HEK293 (cell line): ENCODE measurements at regions of chr17 and their contacts with region 1.

Region 1: GRCh38 chr17:32877164-32877764 is 340 bp upstream of the MYO1D start:
- H3K4me3 ChIP-seq: peak overlapping the region; percentile 88
- H3K27ac ChIP-seq: peak overlapping the region; percentile 96; the same call in 1 of the 2 replicates
- H3K4me1 ChIP-seq: peaks cover 9% of the 10 kb centered on the region
- CTCF ChIP-seq: peak; percentile 53

Region 2: GRCh38 chr17:32769839-32770238 is 107.4 kb before region 1 on chr17:
- CTCF ChIA-PET with region 1: interaction called, 18 read pairs
- POLR2A ChIA-PET with region 1: no interaction called
- H3K4me3 ChIP-seq: no peak overlapping the region
- H3K27ac ChIP-seq: no peak overlapping the region
- H3K4me1 ChIP-seq: 0 out of 2 replicates have a peak, but pooled peaks cover 3% of the 10 kb centered on the region
- CTCF ChIP-seq: no peak

Region 3: GRCh38 chr17:32805029-32805976 is 72.0 kb before region 1 on chr17:
- CTCF ChIA-PET with region 1: interaction called, 21 read pairs
- POLR2A ChIA-PET with region 1: no interaction called
- H3K4me3 ChIP-seq: no peak overlapping the region
- H3K27ac ChIP-seq: no peak overlapping the region
- H3K4me1 ChIP-seq: peaks cover 2% of the 10 kb centered on the region; the same call in 1 of the 2 replicates
- CTCF ChIP-seq: no peak

Region 4: DNA sequence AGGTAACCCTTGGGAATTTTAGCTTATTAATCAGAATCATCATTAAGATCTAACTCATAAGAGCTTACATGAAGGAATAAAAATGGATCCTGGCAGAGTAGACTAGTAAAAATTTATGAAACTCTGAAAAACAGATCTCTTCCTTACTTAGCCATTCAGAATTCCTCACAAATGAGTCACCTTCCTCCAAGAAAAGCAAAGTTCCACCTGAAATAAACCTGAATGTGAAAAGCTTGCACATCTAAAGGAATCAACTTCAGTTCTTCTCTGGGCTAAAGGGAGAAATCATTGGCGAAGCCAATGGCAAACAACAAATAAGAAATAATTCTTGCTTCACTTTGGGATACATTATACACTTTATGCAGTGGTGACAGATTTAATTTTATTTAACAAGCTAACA is 23.1 kb before region 1 on chr17:
- CTCF ChIA-PET with region 1: interaction called, 36 read pairs
- POLR2A ChIA-PET with region 1: interaction called, 4 read pairs
- H3K4me3 ChIP-seq: no peak overlapping the region
- H3K27ac ChIP-seq: no peak overlapping the region
- H3K4me1 ChIP-seq: peaks cover 13% of the 10 kb centered on the region
- CTCF ChIP-seq: no peak

Region 5: DNA sequence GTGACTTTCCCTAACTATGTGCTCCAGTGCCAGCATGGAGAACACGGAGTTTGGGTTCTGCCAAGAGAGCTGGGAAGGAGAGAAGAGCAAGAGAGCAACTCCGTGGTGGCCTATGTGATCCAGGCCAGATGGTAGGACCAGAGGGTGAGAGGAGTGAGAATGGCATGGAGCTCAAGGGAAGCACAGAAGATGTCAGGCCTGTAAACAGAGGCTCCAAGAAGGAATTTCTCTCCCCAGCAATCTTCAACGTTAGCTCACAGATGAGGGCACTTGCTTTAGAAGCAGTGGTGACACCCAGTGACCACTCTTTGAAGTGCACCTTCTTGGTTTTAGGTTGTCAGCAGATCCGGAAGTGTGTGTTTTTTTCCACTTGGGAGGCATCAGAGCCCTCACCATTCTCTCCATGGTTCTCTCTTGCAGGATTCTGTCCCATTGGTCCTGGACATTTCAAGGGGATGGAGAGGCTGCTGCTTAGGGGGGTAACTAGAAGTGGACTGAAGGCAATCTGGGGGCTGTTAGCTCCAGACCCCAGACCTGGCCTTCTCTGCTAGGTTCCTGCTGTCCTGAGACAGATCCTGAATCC is 32.6 kb after region 1 on chr17:
- CTCF ChIA-PET with region 1: interaction called, 69 read pairs
- POLR2A ChIA-PET with region 1: interaction called, 6 read pairs
- H3K4me3 ChIP-seq: no peak overlapping the region
- H3K27ac ChIP-seq: no peak overlapping the region
- H3K4me1 ChIP-seq: no peaks in the 10 kb centered on the region
- CTCF ChIP-seq: peak; percentile 71; the same call in 1 of the 2 replicates